A549 (cell line): ENCODE measurements at regions of chr1 and their contacts with region 1.

Region 1: DNA sequence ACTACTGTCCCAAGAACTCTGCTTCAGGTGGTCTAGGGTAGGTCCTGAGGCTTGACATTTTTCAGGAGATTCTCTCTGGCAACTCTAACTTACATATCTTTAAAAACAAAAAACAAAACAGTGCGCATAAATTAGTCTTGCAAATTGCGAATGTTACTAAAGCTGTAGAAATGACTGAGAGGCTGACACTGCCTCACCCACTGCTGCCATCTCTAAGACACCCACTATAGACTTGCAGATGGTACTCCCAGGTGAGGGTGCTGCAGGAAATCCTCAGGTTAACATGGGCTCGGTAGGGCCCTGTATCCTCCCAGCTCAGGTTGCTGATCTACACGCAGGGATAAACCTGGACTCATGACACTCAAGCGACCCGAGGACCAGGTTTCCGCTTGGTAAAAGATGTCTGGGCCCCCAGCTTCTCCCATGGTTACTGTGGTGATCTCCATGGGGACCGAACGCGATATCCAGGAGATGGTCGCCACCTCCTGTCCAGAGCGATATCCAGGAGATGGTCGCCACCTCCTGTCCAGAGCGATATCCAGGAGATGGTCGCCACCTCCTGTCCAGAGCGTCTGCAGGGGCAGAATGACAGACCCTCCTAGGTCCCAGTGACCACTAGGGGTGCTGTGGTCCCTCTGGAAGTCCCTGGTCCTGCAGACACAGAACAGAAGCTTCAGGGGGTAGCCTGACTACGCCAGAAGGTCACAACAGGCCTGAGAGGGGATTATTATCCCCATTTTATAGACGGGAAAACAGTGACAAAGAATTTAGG is 16.2 kb upstream of the LY9 start:
- DNase-seq: peak; percentile 50 to 70
- ATAC-seq: peak; percentile 73 to 95; a peak in 5 of 6 replicates
- H3K4me3 ChIP-seq: no peak overlapping the region
- H3K27ac ChIP-seq: no peak overlapping the region
- H3K4me1 ChIP-seq: no peaks in the 10 kb centered on the region
- CTCF ChIP-seq: peak; percentile 57
- EP300 ChIP-seq: no peak
- POLR2A ChIP-seq: no peak
- RAD21 ChIP-seq: peak; percentile 55 to 78

Region 2: GRCh38 chr1:160675641-160676410 is 104.0 kb before region 1 on chr1:
- CTCF ChIA-PET with region 1: interaction called, 11 read pairs
- POLR2A ChIA-PET with region 1: no interaction called
- DNase-seq: peak; percentile 45 to 77
- ATAC-seq: peak; percentile 92 to 97
- H3K4me3 ChIP-seq: no peak overlapping the region
- H3K27ac ChIP-seq: no peak overlapping the region
- H3K4me1 ChIP-seq: no peaks in the 10 kb centered on the region
- CTCF ChIP-seq: peak; percentile 80
- EP300 ChIP-seq: no peak
- POLR2A ChIP-seq: no peak
- RAD21 ChIP-seq: peak; percentile 73 to 78

Region 3: DNA sequence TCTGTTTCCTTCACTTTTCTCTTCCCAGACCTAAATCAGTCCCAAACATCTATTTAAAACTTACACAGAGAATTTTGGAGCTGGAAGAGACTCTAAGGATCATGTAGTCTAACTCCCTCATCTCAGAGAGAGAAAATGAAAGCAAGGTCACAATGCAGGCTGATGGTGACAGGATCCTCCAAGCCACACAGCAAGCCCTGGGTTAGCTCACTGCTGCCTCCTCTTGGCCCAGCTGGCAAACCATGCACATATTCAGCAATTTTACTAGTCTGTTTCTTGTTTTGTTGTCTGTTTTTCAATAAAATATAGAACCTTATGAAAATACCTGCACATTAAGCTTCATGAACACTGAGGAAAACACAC is 11.5 kb before region 1 on chr1:
- CTCF ChIA-PET with region 1: interaction called, 10 read pairs
- POLR2A ChIA-PET with region 1: no interaction called
- DNase-seq: peak in 1 of 2 experiments; percentile 53
- ATAC-seq: peak; percentile 50 to 86; a peak in 4 of 6 replicates
- H3K4me3 ChIP-seq: no peak overlapping the region
- H3K27ac ChIP-seq: no peak overlapping the region
- H3K4me1 ChIP-seq: no peaks in the 10 kb centered on the region
- CTCF ChIP-seq: peak; percentile 31; the same call in 1 of the 3 replicates
- EP300 ChIP-seq: no peak
- POLR2A ChIP-seq: no peak
- RAD21 ChIP-seq: peak in 1 of 2 experiments; percentile 60; a peak in 2 of 5 replicates

Region 4: DNA sequence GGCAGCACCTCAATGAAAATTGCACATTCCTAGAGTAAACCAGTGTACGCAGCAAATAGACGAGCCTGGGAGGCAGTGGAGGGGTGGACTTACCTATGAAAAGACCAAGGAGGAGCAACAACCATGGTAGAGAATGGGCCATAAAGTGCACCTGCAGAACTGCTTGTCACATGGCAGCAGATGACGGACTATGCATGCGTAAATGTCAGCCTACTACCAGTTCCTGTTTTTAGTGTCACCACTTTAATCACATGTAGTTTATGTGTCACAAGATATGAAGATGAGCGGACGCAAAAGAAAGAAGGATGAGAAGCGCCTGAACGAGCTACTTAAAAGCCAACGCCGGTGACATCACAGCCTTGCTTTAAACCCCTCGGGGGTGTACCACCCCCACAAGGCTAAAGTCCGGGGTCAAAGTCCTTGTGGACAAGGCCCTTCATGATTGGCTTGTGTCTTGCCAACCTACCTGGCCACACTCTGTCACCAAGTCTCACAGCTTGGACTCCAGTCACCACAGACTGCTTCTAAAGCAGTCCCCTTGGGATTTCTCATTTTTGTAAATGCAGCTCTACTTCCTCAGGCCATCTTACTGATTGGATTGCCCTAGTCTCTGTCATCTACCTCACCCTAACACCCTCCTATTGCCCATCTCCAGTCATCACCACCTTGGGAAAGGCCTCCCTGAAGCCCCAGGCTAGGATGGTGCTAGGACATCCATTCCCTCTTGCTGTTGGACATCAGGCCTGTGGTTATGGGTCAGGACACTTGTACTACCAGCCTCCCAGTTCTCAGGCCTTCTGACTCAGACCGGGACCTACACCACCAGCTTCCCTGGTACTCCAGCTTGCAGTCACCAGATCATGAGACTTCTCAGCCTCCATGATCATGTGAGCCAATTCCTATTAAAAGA is 10.1 kb after region 1 on chr1:
- CTCF ChIA-PET with region 1: interaction called, 11 read pairs
- POLR2A ChIA-PET with region 1: no interaction called
- DNase-seq: no peak
- ATAC-seq: peak in 1 of 2 experiments; percentile 43; a peak in 3 of 6 replicates
- H3K4me3 ChIP-seq: no peak overlapping the region
- H3K27ac ChIP-seq: no peak overlapping the region
- H3K4me1 ChIP-seq: no peaks in the 10 kb centered on the region
- CTCF ChIP-seq: no peak
- EP300 ChIP-seq: no peak
- POLR2A ChIP-seq: no peak
- RAD21 ChIP-seq: no peak

Region 5: GRCh38 chr1:160797861-160798273 is 18.1 kb after region 1 on chr1:
- CTCF ChIA-PET with region 1: interaction called, 12 read pairs
- POLR2A ChIA-PET with region 1: no interaction called
- DNase-seq: no peak
- ATAC-seq: no peak
- H3K4me3 ChIP-seq: no peak overlapping the region
- H3K27ac ChIP-seq: no peak overlapping the region
- H3K4me1 ChIP-seq: no peaks in the 10 kb centered on the region
- CTCF ChIP-seq: no peak
- EP300 ChIP-seq: no peak
- POLR2A ChIP-seq: no peak
- RAD21 ChIP-seq: no peak